Kidney (tissue), 22 donors: ENCODE measurements at regions of chr3 and their contacts with region 1.

Region 1: DNA sequence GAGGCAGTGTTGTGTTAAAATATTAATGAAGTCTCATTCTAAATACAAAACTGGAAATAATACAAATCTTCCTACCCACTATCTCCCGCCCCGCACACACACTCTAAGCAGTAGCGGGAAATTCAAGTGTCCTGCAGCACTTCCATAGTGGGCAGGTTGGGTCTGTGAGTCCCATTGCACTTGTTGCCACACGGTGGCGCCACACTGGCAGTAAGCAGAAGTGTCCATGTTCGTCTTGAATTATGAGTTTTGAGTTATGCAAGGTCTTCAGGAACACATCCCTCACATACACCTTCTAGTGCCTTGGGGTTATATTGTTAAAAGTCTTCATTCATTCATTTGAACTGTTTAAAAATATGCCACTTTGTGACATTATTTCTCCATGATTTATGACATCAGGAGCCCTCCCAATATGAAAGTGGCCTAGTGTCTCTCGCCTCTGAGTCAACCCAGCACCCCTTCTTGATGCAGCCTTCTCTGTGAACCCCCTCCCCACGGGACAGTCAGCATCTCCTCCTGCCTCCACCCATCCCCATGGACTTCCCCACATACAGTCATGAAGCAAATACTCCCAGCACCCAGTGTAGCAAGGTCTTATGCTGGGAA is 17.6 kb upstream of the CCDC174 start:
- DNase-seq: peak in 3 of 5 donors; percentile 24 to 55 (median 27)
- H3K4me3 ChIP-seq: no peak overlapping the region
- H3K27ac ChIP-seq: no peak overlapping the region
- H3K4me1 ChIP-seq: no peaks in the 10 kb centered on the region
- H3K27me3 ChIP-seq: no peaks in the 10 kb centered on the region
- CTCF ChIP-seq: peak; percentile 83

Region 2: DNA sequence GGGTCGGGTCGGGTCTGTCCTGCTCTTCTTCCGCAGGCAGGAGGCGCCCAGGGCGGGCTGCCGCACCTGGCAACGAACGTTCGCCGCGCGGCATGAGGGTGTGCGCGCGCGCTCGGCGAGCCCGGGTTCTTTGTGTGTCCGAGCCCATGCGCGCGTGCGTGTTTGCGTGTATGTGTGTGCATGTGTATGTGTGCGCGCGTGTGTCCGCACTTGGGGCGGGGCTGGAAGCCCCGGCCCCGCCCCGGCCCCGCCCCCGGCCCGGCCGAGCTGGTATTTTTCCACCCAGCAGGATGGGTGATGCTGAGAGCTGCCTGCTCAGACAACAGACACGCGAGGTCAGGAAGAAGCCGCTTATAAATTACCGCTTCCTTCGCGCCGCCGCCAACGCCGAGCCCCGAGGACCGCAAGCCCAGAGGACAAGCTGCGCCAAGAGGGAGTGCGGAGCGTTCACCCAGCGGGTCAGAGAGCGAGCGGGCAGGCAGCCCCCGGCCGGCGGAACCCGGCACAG is 231.6 kb before region 1 on chr3 and contains the start of gene SLC6A6:
- intact Hi-C with region 1: no loop called
- DNase-seq: peak; percentile 96 to 98 (median 97)
- H3K4me3 ChIP-seq: peak within 1 kb of the TSS; percentile 93 to 99 (median 98)
- H3K27ac ChIP-seq: peak within 1 kb of the TSS; percentile 79 to 91
- H3K4me1 ChIP-seq: peaks cover 7 to 33% (median 18%) of the 10 kb centered on the region in 3 donors
- H3K27me3 ChIP-seq: no peaks in the 10 kb centered on the region
- CTCF ChIP-seq: peak; percentile 37
- total RNA-seq, gene SLC6A6: 64.0 TPM

Region 3: GRCh38 chr3:14511628-14512280 is 122.2 kb before region 1 on chr3:
- intact Hi-C with region 1: loop called (anchors 10 kb)
- DNase-seq: peak in 1 of 5 donors; percentile 45
- H3K4me3 ChIP-seq: no peak overlapping the region
- H3K27ac ChIP-seq: no peak overlapping the region
- H3K4me1 ChIP-seq: no peaks in the 10 kb centered on the region
- H3K27me3 ChIP-seq: no peaks in the 10 kb centered on the region
- CTCF ChIP-seq: no peak

Region 4: GRCh38 chr3:14565868-14566588 is 67.9 kb before region 1 on chr3:
- intact Hi-C with region 1: no loop called
- DNase-seq: no peak
- H3K4me3 ChIP-seq: no peak overlapping the region
- H3K27ac ChIP-seq: no peak overlapping the region
- H3K4me1 ChIP-seq: no peaks in the 10 kb centered on the region
- H3K27me3 ChIP-seq: no peaks in the 10 kb centered on the region
- CTCF ChIP-seq: no peak

Region 5: DNA sequence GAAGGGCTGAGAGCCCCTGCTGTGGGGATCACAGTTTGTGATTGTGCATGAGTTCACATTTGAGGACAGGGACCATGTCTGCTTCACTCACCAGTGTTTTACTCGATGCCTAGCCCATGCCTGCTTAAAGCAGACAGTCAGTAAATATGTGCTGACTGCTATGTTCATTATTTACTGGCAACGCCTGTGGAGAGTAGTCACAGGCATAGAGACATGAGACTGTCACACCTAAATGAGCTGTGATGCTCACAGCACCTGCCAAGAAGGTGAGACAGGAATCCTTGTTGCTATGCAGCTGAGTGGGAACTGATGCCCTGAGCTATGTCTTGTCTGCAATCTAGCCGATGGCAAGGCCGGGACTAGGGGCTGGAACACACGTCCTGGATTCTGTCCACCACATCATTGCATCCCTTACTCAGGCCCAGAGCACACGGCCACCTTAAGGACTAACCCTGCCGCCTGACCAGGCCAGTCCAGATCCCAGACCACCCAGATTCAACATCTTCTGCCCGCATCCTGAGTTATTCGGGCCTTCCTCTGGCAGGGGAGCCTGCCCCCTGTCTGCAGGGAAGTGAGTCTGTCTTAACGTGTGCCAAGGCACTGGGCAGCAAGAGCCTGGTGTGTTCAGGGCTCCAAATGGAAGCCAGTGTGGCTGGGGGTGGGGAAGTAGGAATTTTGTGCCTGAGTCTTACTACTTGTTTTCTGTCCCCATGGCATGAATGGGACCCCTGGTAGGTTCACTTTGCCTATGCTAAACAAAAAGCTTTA is 229.6 kb after region 1 on chr3:
- intact Hi-C with region 1: no loop called
- DNase-seq: no peak
- H3K4me3 ChIP-seq: no peak overlapping the region
- H3K27ac ChIP-seq: peak overlapping the region in 1 of 2 donors; percentile 60
- H3K4me1 ChIP-seq: peaks cover 0 to 26% (median 0%) of the 10 kb centered on the region in 3 donors
- H3K27me3 ChIP-seq: no peaks in the 10 kb centered on the region
- CTCF ChIP-seq: peak; percentile 19